Activated B cell treated with CpG ODN at 0.5 μM for 24 hours (primary cell): ENCODE measurements at regions of chr14 and their contacts with region 1.

Region 1: GRCh38 chr14:50667996-50668825 is at the start of gene SAV1:
- DNase-seq: peak; percentile 63
- ATAC-seq: peak; percentile 65
- H3K4me3 Mint-ChIP-seq: no peak within 1 kb of the TSS
- H3K27ac Mint-ChIP-seq: no peak within 1 kb of the TSS
- H3K4me1 Mint-ChIP-seq: peaks cover 32% of the 10 kb centered on the region
- H3K27me3 Mint-ChIP-seq: no peaks in the 10 kb centered on the region
- CTCF ChIP-seq: no peak
- total RNA-seq, gene SAV1: 31.0 and 33.3 TPM in 2 replicates

Region 2: DNA sequence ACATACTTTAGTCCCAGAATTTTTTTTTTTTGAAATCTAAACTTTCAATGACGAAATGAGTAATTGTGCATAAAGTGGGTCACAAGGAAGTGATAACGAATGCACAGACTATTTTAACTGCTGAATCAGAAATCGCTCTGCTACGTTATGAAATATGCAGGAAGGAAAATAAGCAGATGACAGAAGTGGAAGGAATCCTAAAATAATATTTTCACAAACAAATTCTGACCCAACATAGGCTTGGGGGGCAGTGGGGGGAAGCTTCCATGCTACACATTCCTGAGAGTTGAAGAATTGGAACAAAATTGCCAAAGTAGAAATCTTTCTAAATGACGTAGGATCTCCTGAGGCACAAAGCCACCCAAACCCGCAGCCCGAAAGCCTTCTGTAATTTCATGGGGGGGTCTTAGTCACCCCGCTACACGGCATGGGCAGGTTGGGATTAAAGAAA is 685.7 kb before region 1 on chr14:
- CTCF ChIA-PET with region 1: no interaction called
- POLR2A ChIA-PET with region 1: no interaction called
- intact Hi-C with region 1: no loop called
- DNase-seq: no peak
- ATAC-seq: no peak
- H3K4me3 Mint-ChIP-seq: no peak overlapping the region
- H3K27ac Mint-ChIP-seq: peak overlapping the region; percentile 87
- H3K4me1 Mint-ChIP-seq: peaks cover 55% of the 10 kb centered on the region
- H3K27me3 Mint-ChIP-seq: no peaks in the 10 kb centered on the region
- CTCF ChIP-seq: no peak

Region 3: GRCh38 chr14:50321009-50321660 is 347.1 kb before region 1 on chr14:
- CTCF ChIA-PET with region 1: no interaction called
- POLR2A ChIA-PET with region 1: no interaction called
- intact Hi-C with region 1: loop called (anchors 5 kb)
- DNase-seq: no peak
- ATAC-seq: peak; percentile 94
- H3K4me3 Mint-ChIP-seq: no peak overlapping the region
- H3K27ac Mint-ChIP-seq: no peak overlapping the region
- H3K4me1 Mint-ChIP-seq: peaks cover 21% of the 10 kb centered on the region
- H3K27me3 Mint-ChIP-seq: no peaks in the 10 kb centered on the region
- CTCF ChIP-seq: peak; percentile 43

Region 4: DNA sequence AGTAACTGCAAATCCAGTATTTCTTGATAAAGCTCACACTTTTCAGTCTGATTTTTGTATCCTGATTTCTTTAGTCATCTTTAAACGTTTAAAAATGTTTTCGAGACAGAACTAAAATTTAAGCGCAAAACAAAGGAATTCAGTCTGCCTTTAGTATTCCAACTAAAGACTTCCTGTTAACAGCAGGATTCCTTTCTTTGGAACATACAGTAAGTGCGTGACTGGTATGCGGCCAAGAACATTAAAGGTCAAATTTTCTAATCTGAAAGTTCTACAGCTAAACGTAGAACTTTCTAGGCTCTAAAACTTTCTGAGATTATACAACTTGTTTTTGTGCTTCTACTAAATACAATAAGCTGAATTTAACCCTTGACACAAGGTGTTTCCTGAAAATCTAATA is 10.0 kb before region 1 on chr14:
- CTCF ChIA-PET with region 1: no interaction called
- POLR2A ChIA-PET with region 1: interaction called, 3 read pairs
- intact Hi-C with region 1: loop called (anchors 2 kb)
- DNase-seq: no peak
- ATAC-seq: no peak
- H3K4me3 Mint-ChIP-seq: no peak overlapping the region
- H3K27ac Mint-ChIP-seq: no peak overlapping the region
- H3K4me1 Mint-ChIP-seq: peaks cover 54% of the 10 kb centered on the region
- H3K27me3 Mint-ChIP-seq: no peaks in the 10 kb centered on the region
- CTCF ChIP-seq: no peak

Region 5: GRCh38 chr14:50726372-50727107 is 58.3 kb after region 1 on chr14:
- CTCF ChIA-PET with region 1: no interaction called
- POLR2A ChIA-PET with region 1: no interaction called
- intact Hi-C with region 1: no loop called
- DNase-seq: no peak
- ATAC-seq: no peak
- H3K4me3 Mint-ChIP-seq: no peak overlapping the region
- H3K27ac Mint-ChIP-seq: no peak overlapping the region
- H3K4me1 Mint-ChIP-seq: peaks cover 6% of the 10 kb centered on the region
- H3K27me3 Mint-ChIP-seq: no peaks in the 10 kb centered on the region
- CTCF ChIP-seq: no peak

Region 6: DNA sequence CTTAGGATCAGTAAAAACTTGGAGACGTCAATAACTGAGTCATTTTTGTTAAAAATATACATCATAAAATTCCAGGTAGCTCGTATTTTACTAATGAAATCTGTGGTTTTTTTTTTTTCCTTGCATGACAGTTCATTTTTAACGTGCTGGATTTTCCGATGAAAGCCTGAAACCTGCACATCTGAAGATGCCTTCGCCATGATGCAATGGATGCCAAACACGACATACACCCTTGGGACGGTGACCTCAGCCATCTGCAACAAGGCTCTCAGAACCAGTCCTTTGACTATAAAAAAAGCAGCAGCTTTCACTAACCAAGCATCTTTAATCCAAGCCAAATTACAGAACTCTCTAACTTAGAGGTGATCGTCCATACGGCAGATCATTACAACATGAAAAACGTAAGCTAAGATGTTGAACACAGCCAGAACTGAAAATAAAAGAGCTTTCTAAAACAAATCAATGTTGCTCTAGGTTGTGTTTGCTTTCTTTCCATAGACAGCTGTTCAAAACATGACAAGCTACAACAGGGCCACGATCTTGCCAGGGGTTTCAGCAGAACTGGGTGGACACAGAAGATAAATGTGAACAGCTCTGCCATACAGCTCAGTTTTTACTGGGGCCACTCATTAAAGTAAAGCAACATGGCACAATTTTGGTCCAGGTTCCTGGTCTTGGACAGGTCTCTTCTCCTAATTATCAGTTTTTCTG is 155.0 kb after region 1 on chr14:
- CTCF ChIA-PET with region 1: no interaction called
- POLR2A ChIA-PET with region 1: no interaction called
- intact Hi-C with region 1: loop called (anchors 5 kb)
- DNase-seq: no peak
- ATAC-seq: peak; percentile 32
- H3K4me3 Mint-ChIP-seq: peak overlapping the region; percentile 81
- H3K27ac Mint-ChIP-seq: peak overlapping the region; percentile 97
- H3K4me1 Mint-ChIP-seq: peaks cover 95% of the 10 kb centered on the region
- H3K27me3 Mint-ChIP-seq: no peaks in the 10 kb centered on the region
- CTCF ChIP-seq: no peak